Cardiac septum (tissue), 1 donor: ENCODE measurements at regions of chr16 and their contacts with region 1.

Region 1: DNA sequence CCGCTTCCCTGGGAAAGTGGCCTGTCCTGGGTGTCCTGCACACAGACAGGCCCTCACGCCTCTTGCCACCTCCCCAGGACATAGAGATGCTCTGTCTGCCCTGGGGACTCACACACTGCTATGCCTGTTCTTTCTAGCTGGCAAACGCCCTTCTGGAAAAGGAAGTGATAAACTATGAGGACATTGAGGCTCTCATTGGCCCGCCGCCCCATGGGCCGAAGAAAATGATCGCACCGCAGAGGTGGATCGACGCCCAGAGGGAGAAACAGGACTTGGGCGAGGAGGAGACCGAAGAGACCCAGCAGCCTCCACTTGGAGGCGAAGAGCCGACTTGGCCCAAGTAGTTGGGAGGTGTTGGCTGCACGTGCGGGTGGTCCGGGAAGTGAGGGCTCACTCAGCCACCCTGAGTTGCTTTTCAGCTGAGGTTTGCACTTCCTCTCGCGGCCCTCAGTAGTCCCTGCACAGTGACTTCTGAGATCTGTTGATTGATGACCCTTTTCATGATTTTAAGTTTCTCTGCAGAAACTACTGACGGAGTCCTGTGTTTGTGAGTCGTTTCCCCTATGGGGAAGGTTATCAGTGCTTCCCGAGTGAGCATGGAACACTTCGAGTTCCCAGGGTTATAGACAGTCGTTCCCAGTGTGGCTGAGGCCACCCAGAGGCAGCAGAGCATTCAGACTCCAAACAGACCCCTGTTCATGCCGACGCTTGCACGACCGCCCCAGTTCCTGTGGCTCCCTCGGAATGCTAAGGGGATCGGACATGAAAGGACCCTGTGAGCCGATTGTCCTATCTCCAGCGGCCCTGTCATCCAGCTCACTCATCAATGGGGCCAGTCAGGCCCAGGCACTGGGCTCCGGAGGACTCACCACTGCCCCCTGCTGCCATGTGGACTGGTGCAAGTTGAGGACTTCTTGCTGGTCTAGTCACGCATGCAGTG is 3.5 kb upstream of the RPL13 start:
- DNase-seq: peak; percentile 88

Region 2: DNA sequence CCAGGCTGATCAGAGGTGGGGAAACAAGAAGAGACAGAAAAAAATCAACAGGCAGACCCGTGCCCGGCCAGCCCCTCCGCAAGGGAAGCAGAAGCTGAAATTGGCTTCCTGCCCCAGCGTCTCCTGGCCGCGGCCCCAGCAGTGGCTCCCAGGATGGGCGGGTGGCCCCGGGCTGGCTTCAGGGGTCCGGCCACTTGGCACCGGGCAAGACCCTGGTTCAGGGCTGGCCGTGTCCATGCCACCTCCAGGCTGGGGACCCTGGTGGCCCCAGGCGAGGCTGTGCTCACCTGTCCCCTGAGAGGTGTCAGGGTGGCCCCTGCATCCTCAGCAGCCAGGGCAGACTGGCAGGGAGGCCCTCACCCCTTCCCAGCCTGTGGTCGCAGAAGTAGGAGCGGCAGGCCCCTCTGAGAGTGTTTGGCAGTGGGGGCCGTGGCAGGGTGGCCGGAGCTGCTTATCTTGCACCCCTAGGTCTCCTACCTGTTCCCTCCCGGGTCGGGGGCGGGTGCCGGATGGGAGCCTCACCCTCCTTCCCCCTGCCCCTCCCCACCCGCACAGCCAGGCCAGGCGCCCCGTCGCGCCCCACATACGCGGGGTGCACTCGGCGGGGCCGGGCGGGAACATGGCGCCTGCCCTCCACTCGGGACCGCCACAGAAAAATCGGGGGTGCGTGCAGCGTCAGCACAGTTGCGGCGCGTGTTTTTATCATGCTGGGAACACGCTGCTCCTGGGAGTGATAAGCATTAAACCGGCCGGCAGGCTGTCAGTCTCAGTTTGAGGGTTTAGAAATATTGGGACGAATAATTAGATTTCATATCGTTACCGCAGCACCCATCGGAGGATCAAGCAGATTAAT is 1033.5 kb before region 1 on chr16:
- intact Hi-C with region 1: no loop called
- DNase-seq: no peak

Region 3: GRCh38 chr16:89334988-89335802 is 221.8 kb before region 1 on chr16:
- intact Hi-C with region 1: loop called (anchors 2 kb)
- DNase-seq: no peak

Region 4: DNA sequence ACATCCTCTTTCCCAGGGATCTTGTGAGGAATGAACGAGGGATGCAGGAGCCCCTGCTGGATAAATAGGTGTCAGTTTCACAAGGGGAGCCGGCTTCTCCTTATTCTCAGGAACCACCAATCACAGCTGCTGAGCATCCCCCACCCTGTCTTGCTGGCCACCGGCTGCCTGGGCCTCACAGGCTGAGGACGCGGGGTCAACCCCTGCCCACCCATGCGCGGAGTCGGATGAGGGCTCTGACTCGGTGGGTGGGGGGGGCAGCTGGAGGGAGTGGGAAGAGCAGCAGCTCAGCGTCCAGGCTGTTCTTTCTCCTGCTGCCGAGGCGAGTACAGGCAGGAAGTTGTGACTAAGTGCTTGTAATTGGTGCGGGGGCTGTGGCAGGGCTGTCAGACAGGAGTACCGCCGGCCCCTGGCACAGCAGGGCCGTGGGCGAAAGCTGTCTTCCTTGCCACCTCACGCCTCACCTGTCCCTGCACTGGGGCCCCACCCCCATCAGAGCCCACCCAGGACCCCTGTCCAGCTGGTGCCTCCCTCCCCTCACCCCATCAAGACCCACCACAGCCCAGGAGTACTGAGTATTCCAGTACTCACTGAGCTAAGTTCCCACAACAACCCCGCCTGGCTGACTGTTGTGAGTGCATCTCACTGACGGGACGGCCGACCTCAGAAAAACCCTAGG is 45.4 kb after region 1 on chr16:
- intact Hi-C with region 1: no loop called
- DNase-seq: no peak